Aorta (tissue), 5 donors: ENCODE measurements at regions of chr4 and their contacts with region 1.

Region 1: GRCh38 chr4:82599336-82599735 is 37.5 kb upstream of the TMEM150C start:
- DNase-seq: no peak
- ATAC-seq: no peak
- H3K4me3 ChIP-seq: no peak overlapping the region
- H3K27ac ChIP-seq: no peak overlapping the region
- H3K4me1 ChIP-seq: no peaks in the 10 kb centered on the region
- H3K27me3 ChIP-seq: peaks cover 0 to 2% of the 10 kb centered on the region in 2 donors

Region 2: GRCh38 chr4:81722290-81722851 is 877.0 kb before region 1 on chr4:
- intact Hi-C with region 1: no loop called
- DNase-seq: no peak
- ATAC-seq: no peak
- H3K4me3 ChIP-seq: no peak overlapping the region
- H3K27ac ChIP-seq: no peak overlapping the region
- H3K4me1 ChIP-seq: peaks cover 0 to 2% of the 10 kb centered on the region in 2 donors
- H3K27me3 ChIP-seq: no peaks in the 10 kb centered on the region

Region 3: DNA sequence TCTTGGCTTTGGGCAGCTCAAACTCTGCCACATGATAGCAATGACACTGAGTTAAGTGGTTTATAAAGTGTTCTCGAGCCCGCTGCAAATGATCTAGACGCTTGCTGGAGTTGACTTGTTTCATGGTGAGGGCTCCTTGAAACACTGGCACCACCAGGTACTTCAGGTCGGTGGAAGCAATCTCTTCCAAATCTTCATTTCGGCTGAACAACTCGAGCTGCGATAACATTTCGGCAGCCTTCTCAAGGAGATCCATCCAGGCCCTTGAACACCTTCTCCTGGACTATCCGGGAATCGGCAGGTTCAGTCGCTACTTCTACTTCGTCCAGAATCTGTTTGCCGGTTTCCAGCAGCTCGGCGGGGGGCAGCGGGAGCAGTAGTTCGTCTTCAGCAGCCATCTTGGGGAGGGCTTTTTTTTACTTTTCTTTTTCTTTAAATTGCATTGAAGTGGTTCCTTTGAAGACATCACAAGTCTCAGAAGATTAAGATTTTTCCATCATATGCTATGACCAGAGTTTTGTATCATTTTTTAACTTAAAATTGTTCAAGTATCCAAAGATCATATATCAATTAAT is 197.0 kb before region 1 on chr4:
- intact Hi-C with region 1: loop called in 1 of 2 experiments (anchors 5 kb)
- DNase-seq: no peak
- ATAC-seq: no peak
- H3K4me3 ChIP-seq: no peak overlapping the region
- H3K27ac ChIP-seq: no peak overlapping the region
- H3K4me1 ChIP-seq: no peaks in the 10 kb centered on the region
- H3K27me3 ChIP-seq: no peaks in the 10 kb centered on the region

Region 4: GRCh38 chr4:82758701-82759685 is 159.7 kb after region 1 on chr4:
- intact Hi-C with region 1: no loop called
- DNase-seq: peak in 1 of 2 donors; percentile 63
- ATAC-seq: no peak
- H3K4me3 ChIP-seq: no peak overlapping the region
- H3K27ac ChIP-seq: no peak overlapping the region
- H3K4me1 ChIP-seq: no peaks in the 10 kb centered on the region
- H3K27me3 ChIP-seq: no peaks in the 10 kb centered on the region